Endothelial cell of umbilical vein (primary cell): ENCODE measurements at regions of chr6 and their contacts with region 1.

Region 1: GRCh38 chr6:165729307-165729936 is 66.4 kb upstream of the PDE10A start:
- DNase-seq: peak; percentile 40
- H3K4me3 ChIP-seq: no peak overlapping the region
- H3K27ac ChIP-seq: no peak overlapping the region
- H3K4me1 ChIP-seq: no peaks in the 10 kb centered on the region
- H3K27me3 ChIP-seq: peaks cover 4% of the 10 kb centered on the region in 2 experiments
- CTCF ChIP-seq: peak; percentile 60 to 70
- POLR2A ChIP-seq: no peak

Region 2: DNA sequence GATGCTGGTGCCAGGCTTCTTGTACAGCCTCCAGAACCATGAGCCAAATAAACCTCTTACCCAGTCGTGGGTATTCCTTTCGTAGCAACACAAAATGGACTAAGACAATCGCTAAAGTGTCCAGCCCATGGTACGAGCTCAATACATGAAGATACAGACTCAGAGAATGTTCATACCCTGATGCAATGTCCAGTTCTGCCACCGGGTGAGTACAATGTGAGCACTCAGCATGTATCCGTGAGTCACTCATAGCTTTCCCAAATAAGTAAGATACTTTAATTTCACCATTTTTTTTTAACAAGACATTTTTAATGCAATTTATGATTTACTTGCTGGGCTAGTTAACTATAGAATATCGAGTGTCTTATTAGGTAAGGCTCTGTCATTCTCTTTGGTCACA is 39.7 kb before region 1 on chr6:
- CTCF ChIA-PET with region 1: interaction called, 3 read pairs
- POLR2A ChIA-PET with region 1: no interaction called
- dilution Hi-C with region 1: no loop called
- intact Hi-C with region 1: loop called (anchors 1 kb)
- DNase-seq: no peak
- H3K4me3 ChIP-seq: no peak overlapping the region
- H3K27ac ChIP-seq: no peak overlapping the region
- H3K4me1 ChIP-seq: no peaks in the 10 kb centered on the region
- H3K27me3 ChIP-seq: peaks cover 0 to 2% of the 10 kb centered on the region in 2 experiments
- CTCF ChIP-seq: no peak
- POLR2A ChIP-seq: no peak

Region 3: DNA sequence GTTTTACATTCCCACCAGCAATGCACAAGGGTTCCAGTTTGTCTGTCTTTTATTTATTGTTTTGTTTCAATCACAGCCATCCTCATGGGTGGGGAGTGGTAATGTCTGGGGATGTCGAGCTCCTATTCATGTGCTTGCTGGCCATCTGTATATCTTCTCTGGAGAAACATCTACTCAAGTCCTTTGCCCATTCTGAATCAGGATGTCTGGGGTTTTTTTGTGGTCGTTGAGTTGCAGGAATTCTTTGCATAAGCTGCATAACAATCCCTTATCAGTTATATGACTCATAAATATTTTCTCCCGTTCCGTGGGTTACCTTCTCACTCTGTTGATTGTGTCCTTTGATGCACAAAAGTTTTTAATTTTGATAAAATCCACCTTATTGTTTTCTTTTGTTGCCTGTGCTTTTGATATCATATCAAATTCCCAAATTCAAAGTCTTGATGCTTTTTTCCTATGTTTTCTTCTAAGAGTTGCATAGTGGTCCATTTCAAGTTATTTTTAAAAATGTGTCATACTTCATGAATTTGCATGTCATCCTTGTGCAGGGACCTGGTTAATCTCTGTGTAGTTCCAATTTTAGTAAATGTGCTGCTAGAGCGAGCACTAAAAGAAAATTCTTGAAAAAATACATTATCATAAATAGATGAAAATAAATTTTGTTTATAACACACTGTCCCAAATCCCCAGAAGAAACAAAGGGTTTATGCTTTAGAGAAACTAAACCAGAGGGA is 11.5 kb before region 1 on chr6:
- CTCF ChIA-PET with region 1: interaction called, 10 read pairs
- POLR2A ChIA-PET with region 1: no interaction called
- dilution Hi-C with region 1: no loop called
- intact Hi-C with region 1: no loop called
- DNase-seq: peak; percentile 53
- H3K4me3 ChIP-seq: no peak overlapping the region
- H3K27ac ChIP-seq: no peak overlapping the region
- H3K4me1 ChIP-seq: peaks cover 5% of the 10 kb centered on the region
- H3K27me3 ChIP-seq: peaks cover 0 to 2% of the 10 kb centered on the region in 2 experiments
- CTCF ChIP-seq: no peak
- POLR2A ChIP-seq: no peak

Region 4: DNA sequence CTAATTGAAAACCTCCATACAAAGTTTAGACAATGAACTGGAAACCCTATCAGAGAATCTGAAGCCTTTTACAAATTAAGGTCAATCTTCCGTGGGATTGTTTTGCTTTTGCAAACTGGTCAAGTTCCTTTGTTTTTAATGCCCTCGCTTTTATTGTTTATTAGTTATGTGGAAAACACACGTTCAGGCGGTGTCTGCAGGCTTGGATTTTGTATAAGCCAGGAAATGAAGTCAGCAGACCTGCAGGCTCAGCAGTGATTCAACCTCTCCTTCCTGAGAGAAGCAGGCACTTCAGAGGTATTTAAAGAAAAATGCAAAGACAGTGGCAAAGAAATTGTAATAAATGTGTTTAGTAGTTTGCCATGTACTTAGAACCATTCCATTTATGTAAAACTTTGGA is 37.0 kb after region 1 on chr6:
- CTCF ChIA-PET with region 1: interaction called, 8 read pairs
- POLR2A ChIA-PET with region 1: no interaction called
- dilution Hi-C with region 1: no loop called
- intact Hi-C with region 1: loop called (anchors 2 kb)
- DNase-seq: peak; percentile 97
- H3K4me3 ChIP-seq: peak overlapping the region in 1 of 3 experiments; percentile 11
- H3K27ac ChIP-seq: peak overlapping the region; percentile 98
- H3K4me1 ChIP-seq: peaks cover 44% of the 10 kb centered on the region
- H3K27me3 ChIP-seq: no peaks in the 10 kb centered on the region
- CTCF ChIP-seq: no peak
- POLR2A ChIP-seq: no peak

Region 5: GRCh38 chr6:165850434-165851019 is 121.1 kb after region 1 on chr6:
- CTCF ChIA-PET with region 1: interaction called, 145 read pairs
- POLR2A ChIA-PET with region 1: no interaction called
- dilution Hi-C with region 1: no loop called
- intact Hi-C with region 1: loop called (anchors 1 kb)
- DNase-seq: peak; percentile 62
- H3K4me3 ChIP-seq: no peak overlapping the region
- H3K27ac ChIP-seq: no peak overlapping the region
- H3K4me1 ChIP-seq: no peaks in the 10 kb centered on the region
- H3K27me3 ChIP-seq: peaks cover 10 to 23% of the 10 kb centered on the region in 2 experiments
- CTCF ChIP-seq: peak; percentile 92 to 94
- POLR2A ChIP-seq: no peak